Panc1 (cell line): ENCODE measurements at regions of chr7 and their contacts with region 1.

Region 1: GRCh38 chr7:148492157-148492860 is 98.3 kb upstream of the C7orf33 start:
- DNase-seq: no peak
- ATAC-seq: no peak
- H3K4me3 ChIP-seq: no peak overlapping the region
- H3K27ac ChIP-seq: no peak overlapping the region
- H3K4me1 ChIP-seq: no peaks in the 10 kb centered on the region
- H3K27me3 ChIP-seq: peaks cover 9% of the 10 kb centered on the region; the same call in 1 of the 2 replicates
- CTCF ChIP-seq: no peak

Region 2: DNA sequence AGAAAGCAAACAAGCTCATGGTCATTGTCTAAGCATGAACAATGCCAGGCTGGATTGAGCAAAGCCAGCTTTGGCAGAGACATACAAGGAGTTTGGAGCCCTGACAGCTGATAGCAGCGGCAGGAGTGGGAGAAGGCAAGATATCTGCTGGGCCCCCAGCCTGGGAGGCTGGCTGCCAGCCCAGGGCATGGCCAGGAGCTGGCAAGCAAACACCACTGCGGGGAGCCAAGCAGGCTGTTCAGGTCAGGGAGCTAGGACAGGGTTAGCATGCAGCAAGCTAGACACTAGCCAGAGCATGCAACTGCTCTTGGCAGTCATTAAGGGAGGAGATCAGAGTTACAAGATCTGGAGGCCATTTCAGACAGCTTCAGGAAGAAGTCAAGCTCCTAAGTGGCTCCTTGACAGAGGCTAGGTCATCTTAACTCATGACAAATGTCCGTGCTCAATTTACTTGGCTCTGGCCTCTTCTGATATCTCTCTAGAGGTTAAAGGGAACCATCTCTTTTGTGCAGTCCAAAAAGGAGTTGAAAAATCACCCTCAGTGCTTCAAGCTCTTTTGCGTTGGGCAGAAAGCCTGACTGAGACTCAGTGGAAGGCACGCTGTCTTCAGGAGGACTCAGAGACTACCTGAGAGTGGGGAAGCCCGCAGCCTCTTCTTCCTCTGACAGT is 338.6 kb before region 1 on chr7:
- CTCF ChIA-PET with region 1: no interaction called
- POLR2A ChIA-PET with region 1: no interaction called
- in situ Hi-C with region 1: no loop called
- intact Hi-C with region 1: no loop called
- DNase-seq: no peak
- ATAC-seq: no peak
- H3K4me3 ChIP-seq: no peak overlapping the region
- H3K27ac ChIP-seq: no peak overlapping the region
- H3K4me1 ChIP-seq: no peaks in the 10 kb centered on the region
- H3K27me3 ChIP-seq: no peaks in the 10 kb centered on the region
- CTCF ChIP-seq: no peak

Region 3: GRCh38 chr7:148458263-148458662 is 34.0 kb before region 1 on chr7:
- CTCF ChIA-PET with region 1: no interaction called
- POLR2A ChIA-PET with region 1: interaction called, 12 read pairs
- in situ Hi-C with region 1: no loop called
- intact Hi-C with region 1: no loop called
- DNase-seq: no peak
- ATAC-seq: no peak
- H3K4me3 ChIP-seq: no peak overlapping the region
- H3K27ac ChIP-seq: no peak overlapping the region
- H3K4me1 ChIP-seq: no peaks in the 10 kb centered on the region
- H3K27me3 ChIP-seq: no peaks in the 10 kb centered on the region
- CTCF ChIP-seq: no peak

Region 4: DNA sequence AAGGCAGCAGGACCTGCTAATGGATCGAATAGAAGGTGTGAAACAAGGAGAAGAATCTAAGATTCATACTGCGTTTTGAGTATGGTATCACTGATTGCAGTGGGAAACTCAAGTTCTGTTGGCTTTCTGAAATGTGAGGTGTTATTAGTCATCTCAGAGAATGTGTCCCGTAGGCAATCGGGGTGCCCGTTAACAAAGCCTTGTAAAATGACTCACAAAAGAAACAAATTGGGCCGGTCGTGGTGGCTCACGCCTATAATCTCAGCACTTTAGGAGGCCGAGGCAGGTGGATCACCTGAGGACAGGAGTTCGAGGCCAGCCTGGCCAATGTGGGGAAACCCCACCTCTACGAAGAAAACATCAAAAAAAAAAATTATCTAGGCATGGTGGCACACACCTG is 19.9 kb before region 1 on chr7:
- CTCF ChIA-PET with region 1: no interaction called
- POLR2A ChIA-PET with region 1: interaction called, 10 read pairs
- in situ Hi-C with region 1: no loop called
- intact Hi-C with region 1: no loop called
- DNase-seq: no peak
- ATAC-seq: no peak
- H3K4me3 ChIP-seq: no peak overlapping the region
- H3K27ac ChIP-seq: no peak overlapping the region
- H3K4me1 ChIP-seq: no peaks in the 10 kb centered on the region
- H3K27me3 ChIP-seq: peaks cover 14% of the 10 kb centered on the region
- CTCF ChIP-seq: no peak